ENCODE measurements at regions of chr17 and their contacts with region 1.

Region 1: DNA sequence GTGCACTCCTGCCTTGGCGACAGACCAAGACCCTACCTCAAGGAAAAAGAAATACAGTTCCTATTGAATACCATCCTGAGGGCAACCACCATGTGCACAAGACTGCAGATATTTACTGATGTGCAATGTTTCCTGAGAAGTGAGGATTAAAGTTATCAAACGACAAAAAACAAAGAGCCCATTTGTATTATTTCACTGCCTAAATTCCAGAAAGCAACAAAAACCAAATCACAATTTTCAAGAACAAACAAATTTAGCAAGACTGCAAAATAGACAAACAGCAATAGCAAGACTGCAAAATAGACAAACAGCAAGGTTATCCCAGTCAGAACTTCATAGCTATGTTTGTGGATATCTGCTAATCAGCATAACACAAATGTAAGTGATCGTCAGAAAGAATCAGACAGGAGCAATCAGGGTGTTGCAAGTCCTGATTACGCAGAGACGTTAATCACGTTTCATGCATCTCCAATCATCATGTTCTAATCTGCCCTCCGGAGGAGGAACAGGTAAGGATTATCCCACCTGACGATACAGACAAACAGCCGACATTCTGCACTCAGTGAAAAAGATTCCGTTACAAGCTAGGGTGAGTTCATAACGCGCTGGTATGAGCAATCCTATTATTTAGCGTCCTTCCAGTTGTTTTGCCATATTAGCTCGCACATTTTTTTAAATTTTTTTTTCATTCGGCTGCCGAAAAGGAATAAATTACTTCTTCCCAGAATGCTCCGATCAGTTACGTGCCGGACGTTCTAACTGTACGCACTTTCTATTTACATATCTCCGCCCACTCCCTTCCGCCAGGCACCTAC is 2.9 kb downstream of the TMEM107 start:
- DNase-seq: peak; percentile 96
- ATAC-seq: peak; percentile 86
- H3K4me3 Mint-ChIP-seq: peak overlapping the region; percentile 89
- H3K27ac Mint-ChIP-seq: peak overlapping the region; percentile 100
- H3K4me1 Mint-ChIP-seq: peaks cover 39% of the 10 kb centered on the region
- H3K27me3 Mint-ChIP-seq: no peaks in the 10 kb centered on the region
- CTCF ChIP-seq: no peak

Region 2: DNA sequence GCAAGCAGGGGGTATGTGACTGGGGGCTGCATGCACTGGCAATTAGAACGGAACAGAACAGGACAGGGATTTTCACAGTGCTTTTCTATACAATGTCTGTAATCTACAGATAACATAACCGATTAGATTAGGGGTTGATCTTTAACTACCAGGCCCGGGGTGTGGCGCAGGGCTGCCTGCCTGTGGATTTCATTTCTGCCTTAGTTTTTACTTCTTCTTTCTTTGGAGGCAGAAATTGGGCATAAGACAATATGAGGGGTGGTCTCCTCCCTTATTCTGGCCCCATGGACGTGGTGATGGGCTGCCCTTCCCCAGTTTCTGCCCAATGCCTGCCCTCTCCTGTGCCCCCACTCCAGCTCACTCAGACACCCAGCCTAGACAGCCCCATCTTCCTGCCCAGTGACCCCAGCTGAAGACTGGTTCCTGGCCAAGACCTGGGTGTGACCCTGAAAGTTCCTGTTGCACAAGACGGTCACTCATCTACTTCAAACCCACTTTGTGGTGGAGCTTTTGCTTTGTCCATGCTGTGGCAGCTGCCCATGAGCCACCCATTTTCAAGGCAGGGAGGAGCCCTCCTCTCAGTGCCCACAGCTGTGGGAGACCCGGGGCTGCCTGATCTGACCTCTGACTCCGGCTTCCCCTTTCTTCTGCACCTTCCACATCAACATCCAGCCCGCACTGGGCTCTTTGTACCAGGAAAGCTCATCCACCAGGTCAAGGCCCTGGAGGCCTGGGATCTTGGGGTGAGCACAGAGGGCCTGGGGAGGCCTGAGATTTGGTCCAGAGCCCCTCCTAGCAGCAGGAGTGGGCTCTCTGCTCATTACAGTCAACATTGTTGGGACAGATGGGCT is 104.3 kb before region 1 on chr17:
- CTCF ChIA-PET with region 1: no interaction called
- POLR2A ChIA-PET with region 1: no interaction called
- intact Hi-C with region 1: no loop called
- DNase-seq: no peak
- ATAC-seq: no peak
- H3K4me3 Mint-ChIP-seq: no peak overlapping the region
- H3K27ac Mint-ChIP-seq: no peak overlapping the region
- H3K4me1 Mint-ChIP-seq: peaks cover 15% of the 10 kb centered on the region
- H3K27me3 Mint-ChIP-seq: peaks cover 30% of the 10 kb centered on the region
- CTCF ChIP-seq: no peak

Region 3: GRCh38 chr17:8125157-8125946 is 47.9 kb before region 1 on chr17:
- CTCF ChIA-PET with region 1: interaction called, 14 read pairs
- POLR2A ChIA-PET with region 1: interaction called, 102 read pairs
- intact Hi-C with region 1: no loop called
- DNase-seq: peak; percentile 93
- ATAC-seq: peak; percentile 28
- H3K4me3 Mint-ChIP-seq: peak overlapping the region; percentile 97
- H3K27ac Mint-ChIP-seq: peak overlapping the region; percentile 90
- H3K4me1 Mint-ChIP-seq: peaks cover 45% of the 10 kb centered on the region
- H3K27me3 Mint-ChIP-seq: peaks cover 32% of the 10 kb centered on the region
- CTCF ChIP-seq: no peak

Region 4: GRCh38 chr17:8156246-8156992 is 16.8 kb before region 1 on chr17:
- CTCF ChIA-PET with region 1: interaction called, 11 read pairs
- POLR2A ChIA-PET with region 1: interaction called, 476 read pairs
- intact Hi-C with region 1: no loop called
- DNase-seq: peak; percentile 100
- ATAC-seq: peak; percentile 73
- H3K4me3 Mint-ChIP-seq: no peak overlapping the region
- H3K27ac Mint-ChIP-seq: no peak overlapping the region
- H3K4me1 Mint-ChIP-seq: peaks cover 59% of the 10 kb centered on the region
- H3K27me3 Mint-ChIP-seq: no peaks in the 10 kb centered on the region
- CTCF ChIP-seq: no peak

Region 5: DNA sequence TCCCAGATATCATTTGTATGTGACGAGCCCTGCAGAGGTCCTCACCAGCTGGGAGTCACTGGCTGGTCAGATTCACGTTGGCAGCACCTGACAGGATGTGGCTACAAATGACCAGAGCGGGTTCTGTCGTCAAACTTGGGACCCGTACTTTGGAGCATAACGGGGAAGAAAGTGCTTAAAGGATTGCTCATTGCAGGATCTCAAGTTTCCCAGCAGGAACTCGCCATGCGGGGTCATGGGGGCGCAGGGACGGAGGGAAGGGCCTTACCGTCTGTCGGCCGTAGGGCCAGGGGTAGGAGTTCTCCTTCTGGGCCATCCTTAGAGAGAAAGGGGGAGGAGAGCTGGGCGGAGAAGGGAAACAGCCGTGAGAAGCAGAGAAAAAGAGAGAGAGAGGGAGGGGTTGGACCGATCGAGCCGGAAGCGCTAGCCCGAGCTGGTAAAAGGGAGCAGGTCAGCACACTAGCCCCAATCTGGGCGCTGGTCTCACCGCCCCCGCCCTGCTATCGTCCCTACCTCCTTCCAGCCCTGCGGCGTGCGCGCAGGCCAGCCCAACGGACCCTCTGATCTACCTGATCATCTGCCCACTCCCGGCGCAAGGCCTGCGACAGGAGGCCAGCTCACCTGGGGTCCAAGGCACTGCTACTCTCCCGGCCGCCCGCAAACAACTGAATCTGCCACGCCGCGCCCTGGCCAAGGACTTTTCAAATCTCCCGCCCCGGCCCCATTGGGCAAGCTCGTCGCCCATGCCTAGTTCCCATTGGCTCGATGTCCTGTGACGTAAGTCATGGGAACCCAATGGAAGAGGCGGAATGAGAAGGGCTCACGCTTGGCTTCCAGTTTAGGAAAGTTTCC is 36.9 kb after region 1 on chr17 and contains the start of gene AURKB:
- CTCF ChIA-PET with region 1: no interaction called
- POLR2A ChIA-PET with region 1: interaction called, 40 read pairs
- intact Hi-C with region 1: no loop called
- DNase-seq: peak; percentile 97
- ATAC-seq: peak; percentile 96
- H3K4me3 Mint-ChIP-seq: peak within 1 kb of the TSS; percentile 91
- H3K27ac Mint-ChIP-seq: peak within 1 kb of the TSS; percentile 96
- H3K4me1 Mint-ChIP-seq: peaks cover 12% of the 10 kb centered on the region
- H3K27me3 Mint-ChIP-seq: no peaks in the 10 kb centered on the region
- CTCF ChIP-seq: no peak
- total RNA-seq, gene AURKB: 170 to 174 TPM

Region 6: GRCh38 chr17:8248751-8249607 is 75.7 kb after region 1 on chr17 and contains the start of gene PFAS:
- CTCF ChIA-PET with region 1: interaction called, 3 read pairs
- POLR2A ChIA-PET with region 1: interaction called, 51 read pairs
- intact Hi-C with region 1: no loop called
- DNase-seq: peak; percentile 98
- ATAC-seq: peak; percentile 53
- H3K4me3 Mint-ChIP-seq: peak within 1 kb of the TSS; percentile 99
- H3K27ac Mint-ChIP-seq: peak within 1 kb of the TSS; percentile 100
- H3K4me1 Mint-ChIP-seq: peaks cover 31% of the 10 kb centered on the region
- H3K27me3 Mint-ChIP-seq: no peaks in the 10 kb centered on the region
- CTCF ChIP-seq: no peak
- total RNA-seq, gene PFAS: 152 to 157 TPM